GM12878 (cell line): ENCODE measurements at regions of chr12 and their contacts with region 1.

Region 1: GRCh38 chr12:42372154-42372791 is 46.3 kb downstream of the PPHLN1 start:
- DNase-seq: peak; percentile 49
- ATAC-seq: peak; percentile 99
- H3K4me3 ChIP-seq: no peak overlapping the region
- H3K27ac ChIP-seq: no peak overlapping the region
- H3K4me1 ChIP-seq: peaks cover 4% of the 10 kb centered on the region
- H3K27me3 ChIP-seq: no peaks in the 10 kb centered on the region
- CTCF ChIP-seq: peak; percentile 71 to 86 (median 83)
- EP300 ChIP-seq: no peak
- POLR2A ChIP-seq: no peak
- RAD21 ChIP-seq: peak; percentile 96

Region 2: DNA sequence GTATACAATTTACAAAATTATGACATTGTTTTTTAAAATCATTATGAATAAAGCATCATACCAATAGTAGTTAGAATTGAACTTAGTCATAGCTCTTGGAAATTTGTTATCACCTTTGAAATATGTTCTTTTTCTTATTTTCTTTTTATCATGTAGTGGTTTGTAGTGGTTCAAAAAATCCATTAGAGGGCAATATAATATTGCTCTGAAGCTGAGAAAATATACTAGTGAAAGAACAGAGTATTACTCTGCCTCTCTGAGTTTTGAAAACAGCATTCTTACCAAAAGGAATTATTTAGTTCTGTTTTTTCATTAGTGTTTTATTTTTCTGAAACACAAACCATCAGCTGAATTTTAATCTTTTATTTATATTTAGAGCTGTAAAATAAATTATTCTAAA is 1108.0 kb before region 1 on chr12:
- CTCF ChIA-PET with region 1: interaction called, 3 read pairs
- POLR2A ChIA-PET with region 1: no interaction called
- RAD21 ChIA-PET with region 1: no interaction called
- SMC1A ChIA-PET with region 1: interaction called, 3 read pairs
- in situ Hi-C with region 1: loop called (anchors 25 kb)
- intact Hi-C with region 1: no loop called
- DNase-seq: no peak
- ATAC-seq: peak; percentile 54; the same call in 2 of the 3 replicates
- H3K4me3 ChIP-seq: no peak overlapping the region
- H3K27ac ChIP-seq: no peak overlapping the region
- H3K4me1 ChIP-seq: no peaks in the 10 kb centered on the region
- H3K27me3 ChIP-seq: no peaks in the 10 kb centered on the region
- CTCF ChIP-seq: peak in 2 of 3 experiments; percentile 4 to 19; a peak in 1 of 6 replicates
- EP300 ChIP-seq: no peak
- POLR2A ChIP-seq: no peak
- RAD21 ChIP-seq: peak; percentile 37

Region 3: DNA sequence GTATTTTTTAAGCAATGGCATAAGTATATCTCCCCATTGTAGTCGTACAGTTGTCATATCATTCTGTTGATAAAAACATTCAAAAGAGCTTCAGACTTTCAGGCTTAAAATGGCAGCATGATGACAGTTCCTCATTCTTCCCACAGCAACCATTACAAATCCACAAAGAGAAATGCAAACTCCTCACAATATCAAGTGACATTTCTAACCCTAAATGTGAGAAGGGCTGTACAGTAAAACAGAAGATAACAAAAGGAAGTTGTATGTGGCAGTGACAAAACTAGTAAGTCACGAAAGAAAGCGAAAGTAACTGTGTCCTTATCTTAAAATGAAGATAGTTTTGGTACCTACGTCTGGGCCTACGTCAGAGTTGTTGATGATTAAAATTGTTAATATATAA is 274.3 kb before region 1 on chr12:
- CTCF ChIA-PET with region 1: interaction called, 10 read pairs
- POLR2A ChIA-PET with region 1: no interaction called
- RAD21 ChIA-PET with region 1: interaction called, 3 read pairs
- SMC1A ChIA-PET with region 1: no interaction called
- in situ Hi-C with region 1: no loop called
- intact Hi-C with region 1: no loop called
- DNase-seq: peak; percentile 42
- ATAC-seq: peak; percentile 93
- H3K4me3 ChIP-seq: peak overlapping the region; percentile 39
- H3K27ac ChIP-seq: peak overlapping the region; percentile 72
- H3K4me1 ChIP-seq: no peaks in the 10 kb centered on the region
- H3K27me3 ChIP-seq: no peaks in the 10 kb centered on the region
- CTCF ChIP-seq: no peak
- EP300 ChIP-seq: peak in 1 of 2 experiments; percentile 40; a peak in 1 of 4 replicates
- POLR2A ChIP-seq: no peak
- RAD21 ChIP-seq: no peak

Region 4: GRCh38 chr12:42299392-42300308 is 72.6 kb before region 1 on chr12:
- CTCF ChIA-PET with region 1: interaction called, 15 read pairs
- POLR2A ChIA-PET with region 1: no interaction called
- RAD21 ChIA-PET with region 1: no interaction called
- SMC1A ChIA-PET with region 1: interaction called, 5 read pairs
- in situ Hi-C with region 1: no loop called
- intact Hi-C with region 1: loop called (anchors 5 kb)
- DNase-seq: peak; percentile 97
- ATAC-seq: peak; percentile 88
- H3K4me3 ChIP-seq: peak overlapping the region; percentile 55; the same call in 1 of the 2 replicates
- H3K27ac ChIP-seq: peak overlapping the region; percentile 77
- H3K4me1 ChIP-seq: peaks cover 20% of the 10 kb centered on the region
- H3K27me3 ChIP-seq: no peaks in the 10 kb centered on the region
- CTCF ChIP-seq: no peak
- EP300 ChIP-seq: peak; percentile 96 to 97
- POLR2A ChIP-seq: no peak
- RAD21 ChIP-seq: peak; percentile 25; the same call in 1 of the 2 replicates

Region 5: GRCh38 chr12:42346403-42347002 is 25.8 kb before region 1 on chr12:
- CTCF ChIA-PET with region 1: interaction called, 17 read pairs
- POLR2A ChIA-PET with region 1: no interaction called
- RAD21 ChIA-PET with region 1: interaction called, 7 read pairs
- SMC1A ChIA-PET with region 1: interaction called, 5 read pairs
- in situ Hi-C with region 1: no loop called
- intact Hi-C with region 1: no loop called
- DNase-seq: no peak
- ATAC-seq: peak; percentile 84
- H3K4me3 ChIP-seq: no peak overlapping the region
- H3K27ac ChIP-seq: no peak overlapping the region
- H3K4me1 ChIP-seq: no peaks in the 10 kb centered on the region
- H3K27me3 ChIP-seq: no peaks in the 10 kb centered on the region
- CTCF ChIP-seq: no peak
- EP300 ChIP-seq: no peak
- POLR2A ChIP-seq: no peak
- RAD21 ChIP-seq: no peak

Region 6: GRCh38 chr12:42498549-42499247 is 126.4 kb after region 1 on chr12:
- CTCF ChIA-PET with region 1: no interaction called
- POLR2A ChIA-PET with region 1: no interaction called
- RAD21 ChIA-PET with region 1: no interaction called
- SMC1A ChIA-PET with region 1: no interaction called
- in situ Hi-C with region 1: no loop called
- intact Hi-C with region 1: no loop called
- DNase-seq: no peak
- ATAC-seq: peak; percentile 48
- H3K4me3 ChIP-seq: no peak overlapping the region
- H3K27ac ChIP-seq: no peak overlapping the region
- H3K4me1 ChIP-seq: no peaks in the 10 kb centered on the region
- H3K27me3 ChIP-seq: no peaks in the 10 kb centered on the region; a peak in 1 of 4 replicates
- CTCF ChIP-seq: no peak
- EP300 ChIP-seq: no peak
- POLR2A ChIP-seq: no peak
- RAD21 ChIP-seq: no peak